ENCODE measurements at regions of chr16 and their contacts with region 1.

Region 1: DNA sequence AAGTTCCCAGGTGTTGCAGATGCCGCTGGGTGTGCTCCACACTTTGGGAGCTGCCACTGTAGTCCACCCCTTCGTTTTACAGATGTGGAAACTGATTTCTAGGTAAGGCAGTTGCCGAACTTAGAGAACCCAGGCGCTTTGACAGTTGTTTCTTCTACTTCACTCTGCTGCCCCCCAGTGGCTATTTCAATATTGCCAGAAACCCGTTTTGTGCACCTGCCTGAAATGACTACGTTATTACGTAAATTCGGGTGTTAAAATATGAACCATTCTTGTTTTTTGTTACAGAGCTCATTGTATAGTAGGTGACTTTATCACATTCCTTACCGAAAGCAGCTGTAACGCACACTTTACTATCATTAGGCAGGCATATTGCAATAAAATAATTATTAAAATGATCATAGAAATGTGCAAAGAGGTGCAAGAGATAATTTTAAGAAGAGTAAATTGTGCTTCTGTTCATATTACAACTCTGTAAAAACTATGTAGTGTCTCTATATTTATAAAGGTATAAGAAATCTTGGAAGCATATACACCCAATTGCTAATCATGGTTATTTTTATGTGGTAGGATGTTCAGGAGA is 44.9 kb downstream of the OTOA start:
- DNase-seq: peak; percentile 27
- ATAC-seq: peak; percentile 72
- H3K4me3 ChIP-seq: no peak overlapping the region
- H3K27ac ChIP-seq: no peak overlapping the region
- H3K4me1 ChIP-seq: peaks cover 6% of the 10 kb centered on the region
- H3K27me3 ChIP-seq: no peaks in the 10 kb centered on the region; a peak in 1 of 4 replicates
- CTCF ChIP-seq: peak; percentile 65 to 85 (median 85)
- EP300 ChIP-seq: no peak
- POLR2A ChIP-seq: no peak
- RAD21 ChIP-seq: peak; percentile 86

Region 2: GRCh38 chr16:20866145-20866772 is 842.4 kb before region 1 on chr16:
- CTCF ChIA-PET with region 1: no interaction called
- POLR2A ChIA-PET with region 1: no interaction called
- RAD21 ChIA-PET with region 1: no interaction called
- SMC1A ChIA-PET with region 1: no interaction called
- in situ Hi-C with region 1: no loop called
- intact Hi-C with region 1: no loop called
- DNase-seq: no peak
- ATAC-seq: peak; percentile 44
- H3K4me3 ChIP-seq: no peak overlapping the region
- H3K27ac ChIP-seq: peak overlapping the region; percentile 98
- H3K4me1 ChIP-seq: peaks cover 28% of the 10 kb centered on the region
- H3K27me3 ChIP-seq: no peaks in the 10 kb centered on the region
- CTCF ChIP-seq: no peak
- EP300 ChIP-seq: peak in 1 of 2 experiments; percentile 8; a peak in 1 of 4 replicates
- POLR2A ChIP-seq: no peak
- RAD21 ChIP-seq: no peak

Region 3: DNA sequence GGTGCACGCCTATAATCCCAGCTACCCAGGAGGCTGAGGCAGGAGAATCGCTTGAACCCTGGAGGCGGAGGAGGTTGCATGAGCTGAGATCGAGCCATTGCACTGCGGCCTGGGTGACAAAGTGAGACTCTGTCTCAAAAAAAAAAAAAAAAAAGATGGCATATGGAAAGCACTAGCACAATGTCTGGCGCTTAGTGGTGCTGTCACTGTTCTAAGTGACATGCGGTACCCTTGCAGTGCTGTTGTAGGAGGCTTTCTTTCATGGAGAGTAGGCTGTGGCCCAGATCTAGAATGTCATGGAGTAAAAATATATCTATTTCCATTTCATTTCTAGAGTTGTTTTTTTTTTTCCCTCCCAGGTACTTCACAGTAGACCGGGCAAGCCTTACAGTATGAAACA is 123.8 kb before region 1 on chr16:
- CTCF ChIA-PET with region 1: interaction called, 43 read pairs
- POLR2A ChIA-PET with region 1: no interaction called
- RAD21 ChIA-PET with region 1: interaction called, 24 read pairs
- SMC1A ChIA-PET with region 1: interaction called, 24 read pairs
- in situ Hi-C with region 1: loop called (anchors 5 kb)
- intact Hi-C with region 1: loop called (anchors 1 kb)
- DNase-seq: no peak
- ATAC-seq: no peak
- H3K4me3 ChIP-seq: no peak overlapping the region
- H3K27ac ChIP-seq: no peak overlapping the region
- H3K4me1 ChIP-seq: no peaks in the 10 kb centered on the region
- H3K27me3 ChIP-seq: no peaks in the 10 kb centered on the region
- CTCF ChIP-seq: no peak
- EP300 ChIP-seq: no peak
- POLR2A ChIP-seq: no peak
- RAD21 ChIP-seq: no peak

Region 4: GRCh38 chr16:21646721-21647561 is 61.7 kb before region 1 on chr16:
- CTCF ChIA-PET with region 1: interaction called, 99 read pairs
- POLR2A ChIA-PET with region 1: no interaction called
- RAD21 ChIA-PET with region 1: interaction called, 7 read pairs
- SMC1A ChIA-PET with region 1: interaction called, 35 read pairs
- in situ Hi-C with region 1: loop called (anchors 10 kb)
- intact Hi-C with region 1: no loop called
- DNase-seq: peak; percentile 99
- ATAC-seq: peak; percentile 91
- H3K4me3 ChIP-seq: no peak overlapping the region
- H3K27ac ChIP-seq: peak overlapping the region; percentile 88
- H3K4me1 ChIP-seq: peaks cover 33% of the 10 kb centered on the region
- H3K27me3 ChIP-seq: no peaks in the 10 kb centered on the region
- CTCF ChIP-seq: no peak
- EP300 ChIP-seq: peak; percentile 36 to 74; a peak in 3 of 4 replicates
- POLR2A ChIP-seq: no peak
- RAD21 ChIP-seq: no peak

Region 5: GRCh38 chr16:21719283-21719682 is 10.7 kb after region 1 on chr16:
- CTCF ChIA-PET with region 1: interaction called, 81 read pairs
- POLR2A ChIA-PET with region 1: interaction called, 4 read pairs
- RAD21 ChIA-PET with region 1: interaction called, 5 read pairs
- SMC1A ChIA-PET with region 1: interaction called, 39 read pairs
- in situ Hi-C with region 1: no loop called
- intact Hi-C with region 1: no loop called
- DNase-seq: no peak
- ATAC-seq: no peak
- H3K4me3 ChIP-seq: no peak overlapping the region
- H3K27ac ChIP-seq: no peak overlapping the region
- H3K4me1 ChIP-seq: peaks cover 3% of the 10 kb centered on the region
- H3K27me3 ChIP-seq: no peaks in the 10 kb centered on the region
- CTCF ChIP-seq: no peak
- EP300 ChIP-seq: no peak
- POLR2A ChIP-seq: no peak
- RAD21 ChIP-seq: no peak

Region 6: GRCh38 chr16:23060458-23061320 is 1352.1 kb after region 1 on chr16:
- CTCF ChIA-PET with region 1: no interaction called
- POLR2A ChIA-PET with region 1: no interaction called
- RAD21 ChIA-PET with region 1: no interaction called
- SMC1A ChIA-PET with region 1: no interaction called
- in situ Hi-C with region 1: no loop called
- intact Hi-C with region 1: loop called (anchors 10 kb)
- DNase-seq: peak; percentile 7
- ATAC-seq: peak; percentile 91
- H3K4me3 ChIP-seq: no peak overlapping the region
- H3K27ac ChIP-seq: no peak overlapping the region
- H3K4me1 ChIP-seq: no peaks in the 10 kb centered on the region
- H3K27me3 ChIP-seq: no peaks in the 10 kb centered on the region
- CTCF ChIP-seq: peak; percentile 78 to 83 (median 79)
- EP300 ChIP-seq: no peak
- POLR2A ChIP-seq: no peak
- RAD21 ChIP-seq: peak; percentile 79

Measured in GM12878 (cell line).